ENCODE measurements at regions of chr2 and their contacts with region 1.

Region 1: GRCh38 chr2:155377266-155377680 is 678.8 kb downstream of the KCNJ3 start:
- DNase-seq: peak in 1 of 2 experiments; percentile 77
- H3K4me3 ChIP-seq: no peak overlapping the region
- H3K4me1 ChIP-seq: 0 out of 2 replicates have a peak, but pooled peaks cover 4% of the 10 kb centered on the region
- H3K27me3 ChIP-seq: no peaks in the 10 kb centered on the region

Region 2: GRCh38 chr2:155310589-155310988 is 66.7 kb before region 1 on chr2:
- in situ Hi-C with region 1: no loop called
- DNase-seq: peak in 1 of 2 experiments; percentile 59
- H3K4me3 ChIP-seq: no peak overlapping the region
- H3K4me1 ChIP-seq: no peaks in the 10 kb centered on the region
- H3K27me3 ChIP-seq: no peaks in the 10 kb centered on the region

Region 3: DNA sequence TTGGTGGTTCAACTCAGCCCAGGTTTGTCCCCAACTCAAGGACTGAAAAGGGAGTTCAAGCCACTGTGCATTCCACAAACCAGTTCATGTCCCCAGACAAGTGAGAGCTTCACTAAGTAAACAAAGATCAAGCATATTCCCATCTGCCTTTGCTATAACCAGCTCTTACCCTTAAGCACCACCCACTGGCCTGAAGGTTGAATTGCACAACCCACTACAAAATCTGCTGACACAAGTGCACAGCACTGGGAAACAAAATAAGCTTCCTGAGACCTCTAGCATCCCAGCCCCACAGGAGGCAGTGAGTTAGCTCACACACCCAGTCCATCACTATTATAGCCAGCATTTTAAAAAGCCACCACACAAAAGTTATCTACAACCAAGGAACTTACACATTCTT is 438.6 kb after region 1 on chr2:
- in situ Hi-C with region 1: loop called (anchors 25 kb)
- DNase-seq: peak; percentile 51 to 57
- H3K4me3 ChIP-seq: no peak overlapping the region
- H3K4me1 ChIP-seq: no peaks in the 10 kb centered on the region
- H3K27me3 ChIP-seq: no peaks in the 10 kb centered on the region

Region 4: DNA sequence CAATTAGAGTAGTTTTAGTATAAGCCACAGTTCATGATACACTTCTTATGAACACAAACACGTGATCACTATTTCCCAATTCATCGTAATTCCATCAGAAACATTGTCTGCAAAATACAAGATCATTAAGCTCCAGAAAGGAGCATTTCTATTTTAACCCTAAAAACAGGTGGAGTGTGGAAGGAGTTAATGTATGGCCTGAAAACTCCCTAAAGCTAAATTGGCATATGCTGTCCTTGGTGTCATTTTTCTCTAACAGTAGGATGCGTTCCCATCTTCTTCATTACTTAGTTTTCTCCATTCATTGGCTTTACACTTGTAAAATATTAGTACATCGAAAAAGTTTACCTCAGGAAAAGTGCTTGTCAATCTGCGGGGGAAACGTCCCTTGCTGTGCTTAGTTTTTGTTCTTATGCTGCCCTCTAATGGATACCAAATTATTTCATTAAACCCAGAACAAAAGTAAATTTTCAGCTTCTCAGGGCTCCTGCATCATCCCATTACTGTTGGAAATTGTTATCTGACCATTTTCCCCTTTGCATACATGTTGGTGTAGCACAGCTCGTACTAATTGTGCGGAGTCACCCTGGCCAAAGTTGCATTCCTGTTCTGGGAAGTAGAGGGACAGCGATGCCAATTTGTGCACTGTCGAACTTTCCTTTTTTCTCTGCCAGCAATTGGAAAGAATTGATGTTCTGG is 1212.3 kb after region 1 on chr2:
- in situ Hi-C with region 1: loop called (anchors 25 kb)
- DNase-seq: peak; percentile 32 to 71
- H3K4me3 ChIP-seq: no peak overlapping the region
- H3K4me1 ChIP-seq: peaks cover 45% of the 10 kb centered on the region
- H3K27me3 ChIP-seq: no peaks in the 10 kb centered on the region

Region 5: GRCh38 chr2:157194097-157194688 is 1816.9 kb after region 1 on chr2:
- in situ Hi-C with region 1: loop called (anchors 25 kb)
- DNase-seq: peak; percentile 41 to 65
- H3K4me3 ChIP-seq: no peak overlapping the region
- H3K4me1 ChIP-seq: peaks cover 4% of the 10 kb centered on the region
- H3K27me3 ChIP-seq: no peaks in the 10 kb centered on the region

Measured in HAP-1 (cell line).